PC-3 (cell line): ENCODE measurements at regions of chr2 and their contacts with region 1.

Region 1: GRCh38 chr2:38274286-38275276 is 102.5 kb downstream of the ATL2 start:
- DNase-seq: peak; percentile 83
- ATAC-seq: peak; percentile 67
- H3K4me3 ChIP-seq: no peak overlapping the region
- H3K27ac ChIP-seq: no peak overlapping the region
- H3K4me1 ChIP-seq: no peaks in the 10 kb centered on the region
- H3K27me3 ChIP-seq: no peaks in the 10 kb centered on the region
- CTCF ChIP-seq: peak; percentile 80

Region 2: DNA sequence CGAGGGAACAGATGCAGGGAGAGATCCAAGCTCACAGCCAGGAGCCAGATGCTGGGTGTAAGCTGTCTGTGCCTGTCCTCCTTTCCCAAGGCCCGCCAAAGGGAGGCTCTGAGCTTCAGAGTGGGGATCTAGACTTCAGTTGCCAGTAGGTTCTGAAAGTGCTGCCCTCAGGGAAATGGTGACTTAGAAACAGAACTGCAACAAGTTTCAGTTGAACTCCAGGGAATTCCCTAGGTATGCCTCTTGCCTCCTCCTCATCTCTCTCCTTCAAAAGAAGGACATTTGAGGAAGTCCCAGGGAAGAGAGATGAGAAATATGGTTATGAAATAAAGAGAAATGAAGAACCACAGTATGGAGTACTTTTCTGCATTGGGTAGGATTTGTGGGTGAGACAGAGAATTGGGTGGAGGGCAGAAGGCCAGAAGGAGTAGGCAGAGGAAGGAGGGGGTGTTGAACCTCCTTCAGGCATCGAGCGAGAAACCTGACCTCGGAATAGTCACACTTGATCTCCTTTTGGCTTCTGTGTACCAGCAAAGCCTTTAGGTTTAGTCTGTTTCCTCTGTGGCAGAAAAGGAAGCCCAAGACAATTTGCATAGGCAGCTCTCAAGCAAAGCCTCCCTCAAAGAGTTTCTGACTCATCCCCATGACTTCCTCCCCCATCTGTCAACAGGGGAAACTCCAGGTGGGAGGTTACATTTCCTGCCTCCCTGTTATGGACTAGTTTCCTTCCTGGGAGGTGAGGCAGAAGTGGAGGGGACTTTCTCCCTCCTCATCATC is 884.4 kb before region 1 on chr2:
- CTCF ChIA-PET with region 1: no interaction called
- POLR2A ChIA-PET with region 1: no interaction called
- intact Hi-C with region 1: loop called (anchors 10 kb)
- DNase-seq: peak; percentile 95
- ATAC-seq: peak; percentile 96
- H3K4me3 ChIP-seq: peak overlapping the region; percentile 8; the same call in 1 of the 2 replicates
- H3K27ac ChIP-seq: peak overlapping the region; percentile 76
- H3K4me1 ChIP-seq: peaks cover 44% of the 10 kb centered on the region
- H3K27me3 ChIP-seq: no peaks in the 10 kb centered on the region
- CTCF ChIP-seq: no peak

Region 3: GRCh38 chr2:37890893-37891495 is 383.6 kb before region 1 on chr2:
- CTCF ChIA-PET with region 1: interaction called, 5 read pairs
- POLR2A ChIA-PET with region 1: no interaction called
- intact Hi-C with region 1: loop called (anchors 2 kb)
- DNase-seq: peak; percentile 89
- ATAC-seq: peak; percentile 97
- H3K4me3 ChIP-seq: no peak overlapping the region
- H3K27ac ChIP-seq: no peak overlapping the region
- H3K4me1 ChIP-seq: no peaks in the 10 kb centered on the region
- H3K27me3 ChIP-seq: no peaks in the 10 kb centered on the region
- CTCF ChIP-seq: peak; percentile 87

Region 4: DNA sequence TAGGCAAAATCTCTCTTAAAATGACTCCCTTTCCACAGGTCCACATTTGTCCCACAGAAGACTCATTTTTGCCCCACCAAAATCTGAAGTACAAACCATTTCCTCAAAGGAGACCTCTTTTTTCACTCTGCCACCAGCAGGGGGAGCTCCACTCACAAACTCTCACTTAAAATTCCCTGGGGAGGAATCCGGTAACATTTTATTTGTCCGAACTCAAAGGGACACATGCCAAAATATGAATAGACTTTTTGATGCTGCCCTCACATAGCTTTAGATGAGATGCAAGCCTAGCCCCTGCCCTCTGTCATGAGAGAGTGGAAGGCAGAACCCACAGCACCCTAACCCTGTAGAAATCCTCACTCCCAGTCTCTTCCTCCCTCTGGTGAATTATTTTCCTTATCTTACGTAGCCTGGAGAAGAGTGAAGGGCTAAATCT is 292.4 kb before region 1 on chr2:
- CTCF ChIA-PET with region 1: interaction called, 10 read pairs
- POLR2A ChIA-PET with region 1: interaction called, 4 read pairs
- intact Hi-C with region 1: loop called (anchors 1 kb)
- DNase-seq: peak; percentile 79
- ATAC-seq: peak; percentile 42; the same call in 1 of the 2 replicates
- H3K4me3 ChIP-seq: no peak overlapping the region
- H3K27ac ChIP-seq: no peak overlapping the region
- H3K4me1 ChIP-seq: 0 out of 2 replicates have a peak, but pooled peaks cover 6% of the 10 kb centered on the region
- H3K27me3 ChIP-seq: no peaks in the 10 kb centered on the region
- CTCF ChIP-seq: peak; percentile 94

Region 5: GRCh38 chr2:37993143-37993542 is 281.4 kb before region 1 on chr2:
- CTCF ChIA-PET with region 1: interaction called, 15 read pairs
- POLR2A ChIA-PET with region 1: no interaction called
- intact Hi-C with region 1: no loop called
- DNase-seq: peak; percentile 60
- ATAC-seq: peak; percentile 63
- H3K4me3 ChIP-seq: no peak overlapping the region
- H3K27ac ChIP-seq: no peak overlapping the region
- H3K4me1 ChIP-seq: 0 out of 2 replicates have a peak, but pooled peaks cover 4% of the 10 kb centered on the region
- H3K27me3 ChIP-seq: no peaks in the 10 kb centered on the region
- CTCF ChIP-seq: peak; percentile 60

Region 6: GRCh38 chr2:38115216-38116032 is 159.2 kb before region 1 on chr2:
- CTCF ChIA-PET with region 1: no interaction called
- POLR2A ChIA-PET with region 1: no interaction called
- intact Hi-C with region 1: loop called (anchors 2 kb)
- DNase-seq: peak; percentile 96
- ATAC-seq: peak; percentile 88
- H3K4me3 ChIP-seq: no peak overlapping the region
- H3K27ac ChIP-seq: peak overlapping the region; percentile 6; the same call in 1 of the 2 replicates
- H3K4me1 ChIP-seq: peaks cover 16% of the 10 kb centered on the region
- H3K27me3 ChIP-seq: no peaks in the 10 kb centered on the region
- CTCF ChIP-seq: peak; percentile 95

Region 7: DNA sequence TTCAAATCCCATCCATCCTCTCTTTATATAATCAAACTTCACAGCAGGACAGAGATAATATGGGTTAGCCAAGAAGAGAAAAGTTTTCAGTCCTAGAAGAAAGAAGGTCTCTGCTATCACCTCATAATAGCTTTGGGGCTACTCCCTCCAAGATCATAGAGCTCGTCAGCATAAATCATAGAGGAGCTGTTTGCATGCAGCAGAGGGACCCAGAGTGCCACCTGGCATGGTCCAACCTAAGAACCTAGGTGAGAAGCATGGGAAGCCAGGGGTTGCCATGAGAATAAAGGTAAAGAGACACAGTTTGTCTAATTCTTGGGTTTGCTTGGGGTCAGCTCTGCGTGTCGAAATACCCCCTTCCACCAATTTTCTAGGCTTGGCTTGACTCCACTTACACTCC is 111.6 kb before region 1 on chr2:
- CTCF ChIA-PET with region 1: interaction called, 22 read pairs
- POLR2A ChIA-PET with region 1: no interaction called
- intact Hi-C with region 1: no loop called
- DNase-seq: peak; percentile 20
- ATAC-seq: no peak; the same call in 1 of the 2 replicates
- H3K4me3 ChIP-seq: no peak overlapping the region
- H3K27ac ChIP-seq: no peak overlapping the region
- H3K4me1 ChIP-seq: no peaks in the 10 kb centered on the region
- H3K27me3 ChIP-seq: no peaks in the 10 kb centered on the region
- CTCF ChIP-seq: peak; percentile 45

Region 8: DNA sequence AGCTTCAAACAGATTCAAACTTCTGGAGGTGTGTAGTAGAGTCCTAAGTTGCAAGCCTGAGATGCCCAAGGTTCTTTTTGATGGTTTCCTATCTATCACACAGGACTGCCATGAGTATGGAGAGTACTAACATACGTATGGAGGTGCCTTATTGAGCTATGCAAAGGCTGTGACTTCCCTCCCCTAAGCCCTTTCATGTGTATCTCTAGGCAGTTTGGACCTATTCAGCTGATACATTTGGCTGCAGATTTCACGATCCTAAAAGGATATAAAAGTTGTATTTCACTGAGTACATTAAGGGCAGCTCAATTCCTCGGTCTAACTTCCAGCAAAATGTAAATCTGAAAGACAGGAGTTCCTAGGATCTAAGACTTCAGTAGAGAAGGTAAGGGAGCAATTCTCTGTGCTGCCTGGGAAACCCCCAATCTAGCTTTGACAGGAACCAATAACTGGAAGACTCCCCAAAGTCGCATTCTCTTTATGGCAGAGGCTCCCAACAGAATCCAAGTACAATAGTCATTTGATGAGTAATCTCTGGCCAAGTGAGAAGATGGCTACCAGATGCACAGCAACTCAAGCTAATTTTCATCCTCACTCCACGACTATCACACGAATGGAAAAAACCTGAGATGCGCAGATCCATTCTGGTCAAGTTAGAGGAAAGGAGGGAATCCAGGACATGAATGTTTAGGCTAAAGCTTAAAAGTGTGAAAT is 18.7 kb after region 1 on chr2:
- CTCF ChIA-PET with region 1: no interaction called
- POLR2A ChIA-PET with region 1: no interaction called
- intact Hi-C with region 1: no loop called
- DNase-seq: no peak
- ATAC-seq: no peak
- H3K4me3 ChIP-seq: no peak overlapping the region
- H3K27ac ChIP-seq: no peak overlapping the region
- H3K4me1 ChIP-seq: no peaks in the 10 kb centered on the region
- H3K27me3 ChIP-seq: no peaks in the 10 kb centered on the region
- CTCF ChIP-seq: no peak

Region 9: GRCh38 chr2:38394903-38395341 is 120.3 kb after region 1 on chr2:
- CTCF ChIA-PET with region 1: no interaction called
- POLR2A ChIA-PET with region 1: no interaction called
- intact Hi-C with region 1: no loop called
- DNase-seq: peak; percentile 86
- ATAC-seq: peak; percentile 52
- H3K4me3 ChIP-seq: no peak overlapping the region
- H3K27ac ChIP-seq: peak overlapping the region; percentile 90
- H3K4me1 ChIP-seq: peaks cover 27% of the 10 kb centered on the region
- H3K27me3 ChIP-seq: no peaks in the 10 kb centered on the region
- CTCF ChIP-seq: no peak

Region 10: GRCh38 chr2:40220177-40220925 is 1945.8 kb after region 1 on chr2:
- CTCF ChIA-PET with region 1: no interaction called
- POLR2A ChIA-PET with region 1: no interaction called
- intact Hi-C with region 1: no loop called
- DNase-seq: peak; percentile 40
- ATAC-seq: no peak
- H3K4me3 ChIP-seq: no peak overlapping the region
- H3K27ac ChIP-seq: no peak overlapping the region
- H3K4me1 ChIP-seq: no peaks in the 10 kb centered on the region
- H3K27me3 ChIP-seq: no peaks in the 10 kb centered on the region
- CTCF ChIP-seq: no peak